PC-9 (cell line): ENCODE measurements at regions of chr10 and their contacts with region 1.

Region 1: GRCh38 chr10:117005027-117005526 is at the start of gene SHTN1:
- DNase-seq: peak; percentile 70 to 84
- H3K4me3 ChIP-seq: peak within 1 kb of the TSS; percentile 84
- H3K27ac ChIP-seq: peak within 1 kb of the TSS; percentile 84
- H3K4me1 ChIP-seq: peaks cover 36% of the 10 kb centered on the region
- H3K27me3 ChIP-seq: no peaks in the 10 kb centered on the region
- CTCF ChIP-seq: no peak
- total RNA-seq, gene SHTN1: 24.5 and 33.6 TPM in 2 replicates

Region 2: GRCh38 chr10:116809483-116810119 is 195.5 kb before region 1 on chr10:
- CTCF ChIA-PET with region 1: no interaction called
- POLR2A ChIA-PET with region 1: no interaction called
- intact Hi-C with region 1: loop called (anchors 10 kb)
- DNase-seq: peak in 1 of 2 experiments; percentile 37
- H3K4me3 ChIP-seq: peak overlapping the region; percentile 27; the same call in 1 of the 2 replicates
- H3K27ac ChIP-seq: no peak overlapping the region
- H3K4me1 ChIP-seq: no peaks in the 10 kb centered on the region
- H3K27me3 ChIP-seq: peaks cover 26% of the 10 kb centered on the region
- CTCF ChIP-seq: peak; percentile 64

Region 3: GRCh38 chr10:116849248-116850057 is 155.6 kb before region 1 on chr10 and contains the start of gene ENO4:
- CTCF ChIA-PET with region 1: no interaction called
- POLR2A ChIA-PET with region 1: no interaction called
- intact Hi-C with region 1: loop called (anchors 2 kb)
- DNase-seq: peak; percentile 72 to 81
- H3K4me3 ChIP-seq: peak within 1 kb of the TSS; percentile 67
- H3K27ac ChIP-seq: no peak within 1 kb of the TSS
- H3K4me1 ChIP-seq: peaks cover 17% of the 10 kb centered on the region
- H3K27me3 ChIP-seq: no peaks in the 10 kb centered on the region
- CTCF ChIP-seq: no peak
- total RNA-seq, gene ENO4: 0.43 and 0.79 TPM in 2 replicates

Region 4: DNA sequence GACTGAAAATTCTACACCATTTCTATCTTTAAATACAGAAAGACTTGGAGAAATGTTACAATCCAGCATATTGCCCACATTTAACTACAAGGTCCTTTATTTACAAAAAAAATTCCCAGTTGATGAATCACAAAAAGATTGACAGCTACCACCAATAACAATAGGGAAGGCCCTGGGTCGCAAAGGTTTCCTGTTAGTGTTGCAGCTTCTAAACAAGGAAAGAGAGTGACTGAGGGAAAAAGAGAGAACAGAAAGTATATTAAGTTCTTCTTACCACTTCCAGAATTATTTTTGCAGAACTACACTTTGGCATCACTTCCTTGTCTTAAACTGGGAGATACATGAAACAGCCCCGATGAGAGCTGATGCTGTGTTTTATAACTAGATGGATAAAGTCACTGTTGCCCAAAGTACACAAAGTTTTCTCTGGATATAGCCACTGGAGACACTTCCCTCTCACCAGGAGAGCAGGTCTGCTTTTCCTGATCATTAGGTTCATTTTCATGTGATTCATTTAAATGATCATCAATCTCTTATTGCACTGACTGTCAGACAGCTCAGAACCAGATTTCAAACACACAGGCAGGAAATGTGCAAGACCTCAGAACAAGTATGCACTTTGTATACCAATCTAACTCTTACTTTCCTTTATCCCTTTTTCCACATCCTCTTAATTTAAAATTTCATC is 57.1 kb before region 1 on chr10:
- CTCF ChIA-PET with region 1: interaction called, 3 read pairs
- POLR2A ChIA-PET with region 1: no interaction called
- intact Hi-C with region 1: loop called (anchors 5 kb)
- DNase-seq: peak; percentile 16 to 80
- H3K4me3 ChIP-seq: no peak overlapping the region; the same call in 1 of the 2 replicates
- H3K27ac ChIP-seq: peak overlapping the region; percentile 74
- H3K4me1 ChIP-seq: peaks cover 25% of the 10 kb centered on the region
- H3K27me3 ChIP-seq: no peaks in the 10 kb centered on the region
- CTCF ChIP-seq: no peak

Region 5: DNA sequence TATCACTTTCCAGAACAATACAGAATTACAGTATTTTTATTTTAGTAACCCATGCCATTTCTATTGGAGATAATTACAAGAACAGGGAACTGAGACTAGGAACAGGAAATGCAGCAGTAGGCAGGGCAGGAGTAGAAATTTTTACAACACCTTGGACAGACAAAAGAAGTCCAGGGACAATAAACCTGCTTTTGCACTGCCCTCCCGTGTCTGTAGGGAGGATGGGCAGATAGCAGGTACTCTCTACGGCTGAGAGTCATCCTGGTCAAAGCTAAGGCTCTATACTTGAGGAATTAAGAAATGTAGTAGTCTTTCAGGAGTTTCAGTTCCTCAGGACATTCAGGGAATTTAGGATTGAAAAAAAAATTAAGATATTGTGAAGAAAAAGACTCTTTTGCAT is 69.5 kb after region 1 on chr10:
- CTCF ChIA-PET with region 1: no interaction called
- POLR2A ChIA-PET with region 1: no interaction called
- intact Hi-C with region 1: loop called (anchors 2 kb)
- DNase-seq: no peak
- H3K4me3 ChIP-seq: no peak overlapping the region
- H3K27ac ChIP-seq: no peak overlapping the region
- H3K4me1 ChIP-seq: peaks cover 15% of the 10 kb centered on the region; the same call in 1 of the 2 replicates
- H3K27me3 ChIP-seq: no peaks in the 10 kb centered on the region
- CTCF ChIP-seq: no peak

Region 6: GRCh38 chr10:117167789-117168674 is 163.0 kb after region 1 on chr10:
- CTCF ChIA-PET with region 1: no interaction called
- POLR2A ChIA-PET with region 1: no interaction called
- intact Hi-C with region 1: loop called (anchors 10 kb)
- DNase-seq: no peak
- H3K4me3 ChIP-seq: no peak overlapping the region
- H3K27ac ChIP-seq: no peak overlapping the region
- H3K4me1 ChIP-seq: no peaks in the 10 kb centered on the region
- H3K27me3 ChIP-seq: peaks cover 27% of the 10 kb centered on the region
- CTCF ChIP-seq: peak; percentile 45